HCT116 (cell line): ENCODE measurements at regions of chr5 and their contacts with region 1.

Region 1: DNA sequence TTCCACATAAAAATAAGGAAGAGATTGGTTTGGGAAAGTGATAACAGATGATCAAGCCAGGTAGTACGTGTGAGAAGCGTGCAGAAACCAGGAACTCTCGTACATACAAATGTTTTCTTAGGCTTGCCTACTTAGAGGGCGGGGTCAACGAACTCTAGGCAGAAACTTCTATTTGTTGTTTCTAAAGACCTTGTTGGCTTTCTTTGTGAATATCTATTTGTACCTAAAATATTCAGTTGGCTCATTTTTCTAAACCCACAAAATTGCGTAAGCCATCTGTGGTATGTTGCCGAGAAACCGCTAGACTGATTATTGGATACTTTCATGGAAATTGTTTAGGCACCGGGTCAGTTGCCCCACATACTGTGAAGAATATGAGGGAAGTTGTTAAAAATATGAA is 458.5 kb downstream of the MAT2B start:
- DNase-seq: no peak
- ATAC-seq: no peak
- H3K4me3 ChIP-seq: no peak overlapping the region
- H3K27ac ChIP-seq: no peak overlapping the region
- H3K4me1 ChIP-seq: no peaks in the 10 kb centered on the region
- H3K27me3 ChIP-seq: no peaks in the 10 kb centered on the region
- CTCF ChIP-seq: no peak
- POLR2A ChIP-seq: no peak
- RAD21 ChIP-seq: no peak

Region 2: DNA sequence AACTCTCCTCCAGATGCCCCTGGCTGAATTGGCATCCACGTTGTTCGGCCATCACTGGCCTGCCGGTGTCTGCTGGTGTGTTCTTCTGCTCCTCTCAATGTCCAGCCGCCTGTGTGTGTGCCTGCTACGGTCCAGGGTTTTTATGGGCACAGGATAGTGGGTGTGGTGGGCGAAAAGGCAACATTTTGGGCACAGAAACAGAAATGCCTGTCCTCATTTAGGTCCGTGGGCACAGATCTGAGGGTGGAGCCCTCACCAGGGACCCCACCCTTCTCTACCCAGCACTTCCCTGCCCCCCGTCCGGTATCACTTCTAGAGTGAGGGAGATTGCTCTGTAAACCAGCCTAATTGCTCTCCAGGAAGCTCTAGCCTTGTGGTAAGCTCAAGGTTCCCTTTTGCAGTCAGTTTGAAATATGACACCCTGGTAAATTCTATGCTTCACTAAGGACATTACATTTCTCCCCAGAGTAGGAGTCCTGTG is 48.4 kb before region 1 on chr5:
- CTCF ChIA-PET with region 1: no interaction called
- POLR2A ChIA-PET with region 1: no interaction called
- RAD21 ChIA-PET with region 1: no interaction called
- intact Hi-C with region 1: no loop called
- DNase-seq: no peak
- ATAC-seq: no peak
- H3K4me3 ChIP-seq: no peak overlapping the region
- H3K27ac ChIP-seq: no peak overlapping the region
- H3K4me1 ChIP-seq: no peaks in the 10 kb centered on the region
- H3K27me3 ChIP-seq: no peaks in the 10 kb centered on the region
- CTCF ChIP-seq: no peak
- POLR2A ChIP-seq: no peak
- RAD21 ChIP-seq: no peak

Region 3: GRCh38 chr5:165286692-165287231 is 1322.9 kb after region 1 on chr5:
- CTCF ChIA-PET with region 1: no interaction called
- POLR2A ChIA-PET with region 1: no interaction called
- RAD21 ChIA-PET with region 1: no interaction called
- intact Hi-C with region 1: loop called (anchors 5 kb)
- DNase-seq: no peak
- ATAC-seq: no peak
- H3K4me3 ChIP-seq: no peak overlapping the region
- H3K27ac ChIP-seq: no peak overlapping the region
- H3K4me1 ChIP-seq: no peaks in the 10 kb centered on the region
- H3K27me3 ChIP-seq: no peaks in the 10 kb centered on the region
- CTCF ChIP-seq: no peak
- POLR2A ChIP-seq: no peak
- RAD21 ChIP-seq: no peak

Region 4: GRCh38 chr5:165502893-165503691 is 1539.2 kb after region 1 on chr5:
- CTCF ChIA-PET with region 1: no interaction called
- POLR2A ChIA-PET with region 1: no interaction called
- RAD21 ChIA-PET with region 1: no interaction called
- intact Hi-C with region 1: loop called (anchors 10 kb)
- DNase-seq: no peak
- ATAC-seq: no peak
- H3K4me3 ChIP-seq: no peak overlapping the region
- H3K27ac ChIP-seq: no peak overlapping the region
- H3K4me1 ChIP-seq: no peaks in the 10 kb centered on the region
- H3K27me3 ChIP-seq: no peaks in the 10 kb centered on the region
- CTCF ChIP-seq: no peak
- POLR2A ChIP-seq: no peak
- RAD21 ChIP-seq: no peak